GM10248 (cell line): ENCODE measurements at regions of chr5 and their contacts with region 1.

Region 1: DNA sequence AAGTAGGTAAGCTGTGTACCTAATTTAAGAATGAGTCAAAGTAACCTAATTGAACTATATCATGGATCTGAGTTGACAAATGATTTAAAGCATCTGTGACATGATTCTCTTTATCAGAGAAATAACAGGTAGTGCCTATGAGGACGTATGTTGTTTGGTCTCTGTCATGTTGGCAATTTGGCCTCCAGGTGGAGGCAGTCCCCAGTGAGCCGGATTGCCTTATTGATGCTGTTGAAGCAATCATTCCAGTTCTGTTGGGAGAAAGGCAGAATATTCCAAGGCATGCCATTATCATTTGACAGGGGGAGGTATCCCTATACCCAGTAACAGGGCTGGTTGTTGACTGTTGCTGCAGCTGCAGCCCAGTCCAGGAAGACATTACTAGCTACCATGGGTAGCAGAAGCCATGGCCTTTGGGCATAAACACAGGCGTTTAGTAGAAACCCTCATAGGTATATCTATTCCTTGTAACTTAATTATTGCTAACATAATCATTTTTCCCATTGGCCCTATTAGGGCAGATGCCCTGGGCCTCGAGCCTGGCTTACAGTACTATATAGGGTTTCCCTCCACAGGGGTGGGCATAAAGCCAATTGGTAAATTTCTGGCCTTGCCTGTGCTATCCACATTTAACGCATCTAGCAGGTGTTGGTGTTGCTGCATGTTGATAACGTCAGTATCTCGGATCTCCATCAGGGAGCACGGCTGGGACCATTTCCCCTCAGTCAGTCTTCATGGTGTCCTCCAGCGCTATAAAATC is 12.2 kb upstream of the SLC22A4 start:
- DNase-seq: no peak
- CTCF ChIP-seq: no peak

Region 2: GRCh38 chr5:132260714-132261551 is 21.1 kb before region 1 on chr5:
- CTCF ChIA-PET with region 1: interaction called, 15 read pairs
- POLR2A ChIA-PET with region 1: no interaction called
- DNase-seq: peak; percentile 46
- CTCF ChIP-seq: no peak